AG04450 (cell line): ENCODE measurements at regions of chr7 and their contacts with region 1.

Region 1: GRCh38 chr7:151550656-151551286 is 31.1 kb upstream of the RHEB start:
- DNase-seq: peak; percentile 79
- H3K4me3 ChIP-seq: no peak overlapping the region
- H3K27ac ChIP-seq: peak overlapping the region; percentile 68
- H3K27me3 ChIP-seq: peaks cover 9% of the 10 kb centered on the region
- CTCF ChIP-seq: no peak

Region 2: DNA sequence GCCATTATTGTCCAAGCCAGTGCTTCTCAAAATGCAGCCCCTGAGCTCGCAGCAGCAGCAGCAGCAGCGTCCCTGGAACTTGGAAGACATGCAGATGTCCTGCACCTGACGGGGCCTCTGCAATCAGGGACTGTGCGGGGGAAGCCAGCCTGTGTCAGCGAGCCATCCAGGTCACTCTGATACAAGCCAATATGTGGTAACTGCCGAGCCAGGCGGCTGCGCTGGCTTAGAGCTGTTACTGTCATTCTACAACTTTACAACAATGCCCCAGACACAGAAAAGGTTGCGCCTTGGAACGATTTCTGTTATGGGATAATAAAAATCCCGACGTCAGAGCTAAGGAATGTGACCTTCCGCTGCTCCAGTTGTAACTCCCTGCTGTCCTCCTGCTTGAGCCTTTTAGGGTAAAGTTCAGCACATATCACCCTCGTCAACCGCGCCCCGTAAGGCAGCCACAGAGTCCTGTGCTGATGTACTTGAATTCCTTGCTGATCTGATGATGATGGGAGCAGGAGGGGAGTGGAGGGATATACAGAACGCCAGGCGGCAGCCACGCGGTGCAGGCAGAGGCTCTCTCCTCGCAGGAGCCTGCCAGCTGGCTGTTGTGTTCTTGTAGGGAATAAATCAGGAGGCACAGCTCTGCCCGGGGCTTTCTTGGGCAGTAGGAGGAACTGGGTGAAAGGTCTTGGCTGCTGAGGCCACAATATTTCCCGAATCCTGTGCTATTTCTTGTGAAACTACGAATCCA is 90.9 kb before region 1 on chr7:
- CTCF ChIA-PET with region 1: no interaction called
- POLR2A ChIA-PET with region 1: interaction called, 13 read pairs
- DNase-seq: peak; percentile 72
- H3K4me3 ChIP-seq: peak overlapping the region; percentile 39
- H3K27ac ChIP-seq: peak overlapping the region; percentile 86
- H3K27me3 ChIP-seq: no peaks in the 10 kb centered on the region
- CTCF ChIP-seq: peak; percentile 53

Region 3: GRCh38 chr7:151585744-151586393 is 35.1 kb after region 1 on chr7:
- CTCF ChIA-PET with region 1: no interaction called
- POLR2A ChIA-PET with region 1: no interaction called
- DNase-seq: no peak
- H3K4me3 ChIP-seq: no peak overlapping the region
- H3K27ac ChIP-seq: no peak overlapping the region
- H3K27me3 ChIP-seq: no peaks in the 10 kb centered on the region
- CTCF ChIP-seq: no peak